Transverse colon (tissue), 4 donors: ENCODE measurements at regions of chr19 and their contacts with region 1.

Region 1: GRCh38 chr19:49436369-49437017 is 4.8 kb downstream of the SLC17A7 start:
- DNase-seq: no peak
- H3K4me3 ChIP-seq: no peak overlapping the region
- H3K27ac ChIP-seq: no peak overlapping the region
- H3K4me1 ChIP-seq: peaks cover 0 to 4% (median under 1%) of the 10 kb centered on the region in 4 donors
- H3K27me3 ChIP-seq: peaks cover 100% of the 10 kb centered on the region
- CTCF ChIP-seq: no peak
- EP300 ChIP-seq: no peak
- POLR2A ChIP-seq: no peak

Region 2: GRCh38 chr19:49391581-49392399 is 44.7 kb before region 1 on chr19:
- in situ Hi-C with region 1: loop called in 3 of 4 experiments (anchors 5 to 10 kb)
- intact Hi-C with region 1: loop called (anchors 5 kb)
- DNase-seq: peak; percentile 84
- H3K4me3 ChIP-seq: no peak overlapping the region
- H3K27ac ChIP-seq: no peak overlapping the region
- H3K4me1 ChIP-seq: peaks cover 0 to 3% (median 0%) of the 10 kb centered on the region in 4 donors
- H3K27me3 ChIP-seq: peaks cover 8% of the 10 kb centered on the region
- CTCF ChIP-seq: peak; percentile 73 to 92 (median 79)
- EP300 ChIP-seq: no peak
- POLR2A ChIP-seq: no peak